PC-9 (cell line): ENCODE measurements at regions of chr14 and their contacts with region 1.

Region 1: GRCh38 chr14:50808053-50808452 is 22.9 kb downstream of the NIN start:
- DNase-seq: no peak
- H3K4me3 ChIP-seq: no peak overlapping the region
- H3K27ac ChIP-seq: no peak overlapping the region
- H3K4me1 ChIP-seq: no peaks in the 10 kb centered on the region
- H3K27me3 ChIP-seq: no peaks in the 10 kb centered on the region
- CTCF ChIP-seq: no peak

Region 2: DNA sequence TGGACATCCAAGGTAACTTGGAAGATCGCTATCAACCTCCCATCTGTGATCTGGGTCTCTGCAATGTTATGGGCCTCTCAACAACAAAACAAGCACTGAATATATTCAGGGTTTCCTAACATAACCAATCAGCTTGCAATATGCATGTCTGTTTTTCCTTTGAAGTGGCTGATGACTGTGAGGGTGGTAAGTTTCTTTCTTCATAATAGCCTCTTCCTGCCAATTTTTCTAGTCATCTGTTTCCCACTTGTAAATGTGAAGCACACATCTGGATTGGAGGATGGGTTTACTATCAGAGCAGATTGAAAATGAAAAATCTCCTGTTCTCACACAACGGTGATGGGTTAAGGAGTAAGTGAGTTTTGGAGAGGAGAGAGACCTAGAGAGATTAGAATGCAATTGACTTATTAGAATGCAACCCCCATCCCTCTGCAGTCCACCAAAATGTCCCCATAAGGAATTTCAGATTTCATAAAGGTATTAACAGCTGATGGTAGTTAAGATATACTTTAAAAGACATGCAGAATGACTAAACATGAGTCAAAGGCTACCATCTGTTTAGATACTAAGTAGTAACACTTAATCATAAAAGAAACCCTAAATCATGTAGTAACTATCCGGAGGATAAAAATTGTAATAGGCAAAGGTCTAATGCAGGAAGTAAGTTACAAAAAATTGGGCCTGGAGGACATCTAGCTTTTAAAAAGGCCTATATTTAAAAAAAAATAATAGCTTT is 81.5 kb before region 1 on chr14:
- CTCF ChIA-PET with region 1: no interaction called
- POLR2A ChIA-PET with region 1: no interaction called
- intact Hi-C with region 1: no loop called
- DNase-seq: no peak
- H3K4me3 ChIP-seq: no peak overlapping the region
- H3K27ac ChIP-seq: no peak overlapping the region
- H3K4me1 ChIP-seq: no peaks in the 10 kb centered on the region
- H3K27me3 ChIP-seq: no peaks in the 10 kb centered on the region
- CTCF ChIP-seq: no peak

Region 3: GRCh38 chr14:50830932-50831725 is 23.1 kb after region 1 on chr14 and contains the start of gene NIN:
- CTCF ChIA-PET with region 1: no interaction called
- POLR2A ChIA-PET with region 1: no interaction called
- intact Hi-C with region 1: no loop called
- DNase-seq: peak; percentile 48 to 79
- H3K4me3 ChIP-seq: peak within 1 kb of the TSS; percentile 88
- H3K27ac ChIP-seq: no peak within 1 kb of the TSS
- H3K4me1 ChIP-seq: 0 out of 2 replicates have a peak, but pooled peaks cover 8% of the 10 kb centered on the region
- H3K27me3 ChIP-seq: no peaks in the 10 kb centered on the region
- CTCF ChIP-seq: no peak
- total RNA-seq, gene NIN: 34.3 and 36.5 TPM in 2 replicates

Region 4: DNA sequence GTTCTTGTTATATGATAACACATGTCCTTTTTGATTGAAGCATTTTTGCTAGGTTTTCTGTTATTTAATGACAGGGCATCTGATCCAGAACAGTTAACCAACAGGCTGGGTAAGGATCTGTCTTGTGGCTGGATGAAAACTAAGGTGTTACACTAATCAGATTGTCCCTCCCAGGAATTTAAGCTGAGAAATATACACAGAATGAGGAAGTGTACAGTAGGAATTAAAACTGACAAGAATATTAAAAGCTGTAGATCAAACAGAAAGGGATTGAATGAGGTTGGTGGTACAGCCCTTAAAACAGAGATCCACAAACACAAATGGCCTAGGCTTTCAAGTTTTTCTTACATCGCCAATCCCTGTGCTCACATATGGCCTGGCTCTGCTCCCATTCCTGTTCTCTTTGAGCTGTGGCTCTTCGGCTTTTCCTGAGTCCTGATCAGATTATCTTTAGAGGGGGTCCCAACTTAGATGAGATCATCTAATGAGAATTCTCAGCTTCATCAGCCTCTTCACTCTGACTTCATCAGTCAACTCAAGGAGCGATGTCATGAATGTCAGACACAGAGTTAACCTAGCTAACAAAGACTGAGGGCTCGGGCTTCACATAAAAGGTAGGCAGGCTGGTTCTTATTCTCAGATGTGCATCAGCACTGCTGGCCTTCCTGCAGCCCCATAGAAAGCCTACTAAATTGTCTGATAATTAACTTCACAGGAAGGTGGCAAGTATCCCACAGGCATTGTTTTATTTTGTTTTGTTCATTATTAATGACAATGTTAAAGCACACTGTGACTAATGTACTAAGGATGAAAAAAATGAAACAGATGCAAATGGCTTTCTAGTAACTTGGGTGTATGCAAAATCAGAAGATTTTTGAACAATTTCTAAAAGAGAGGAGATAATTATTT is 124.8 kb after region 1 on chr14:
- CTCF ChIA-PET with region 1: interaction called, 14 read pairs
- POLR2A ChIA-PET with region 1: no interaction called
- intact Hi-C with region 1: no loop called
- DNase-seq: peak in 1 of 2 experiments; percentile 51
- H3K4me3 ChIP-seq: no peak overlapping the region
- H3K27ac ChIP-seq: 0 out of 2 replicates have a peak overlapping the region, but pooled peaks have one; percentile 15
- H3K4me1 ChIP-seq: peaks cover 17% of the 10 kb centered on the region
- H3K27me3 ChIP-seq: no peaks in the 10 kb centered on the region
- CTCF ChIP-seq: no peak